ENCODE measurements at regions of chr3 and their contacts with region 1.

Region 1: GRCh38 chr3:112676659-112677234 is 35.8 kb upstream of the CCDC80 start:
- DNase-seq: peak; percentile 96
- H3K4me3 Mint-ChIP-seq: peak overlapping the region; percentile 14
- H3K27ac Mint-ChIP-seq: peak overlapping the region; percentile 14
- H3K4me1 Mint-ChIP-seq: peaks cover 52% of the 10 kb centered on the region
- H3K27me3 Mint-ChIP-seq: peaks cover 14% of the 10 kb centered on the region

Region 2: GRCh38 chr3:112464264-112464663 is 212.5 kb before region 1 on chr3:
- CTCF ChIA-PET with region 1: no interaction called
- POLR2A ChIA-PET with region 1: no interaction called
- intact Hi-C with region 1: loop called (anchors 5 kb)
- DNase-seq: no peak
- H3K4me3 Mint-ChIP-seq: no peak overlapping the region
- H3K27ac Mint-ChIP-seq: peak overlapping the region; percentile 31
- H3K4me1 Mint-ChIP-seq: peaks cover 84% of the 10 kb centered on the region
- H3K27me3 Mint-ChIP-seq: no peaks in the 10 kb centered on the region

Region 3: GRCh38 chr3:112958811-112959560 is 282.2 kb after region 1 on chr3:
- CTCF ChIA-PET with region 1: no interaction called
- POLR2A ChIA-PET with region 1: no interaction called
- intact Hi-C with region 1: loop called (anchors 5 kb)
- DNase-seq: peak; percentile 42
- H3K4me3 Mint-ChIP-seq: peak overlapping the region; percentile 69
- H3K27ac Mint-ChIP-seq: peak overlapping the region; percentile 78
- H3K4me1 Mint-ChIP-seq: peaks cover 48% of the 10 kb centered on the region
- H3K27me3 Mint-ChIP-seq: no peaks in the 10 kb centered on the region

Region 4: GRCh38 chr3:113838631-113839209 is 1162.0 kb after region 1 on chr3 and contains the start of gene GRAMD1C:
- CTCF ChIA-PET with region 1: no interaction called
- POLR2A ChIA-PET with region 1: no interaction called
- intact Hi-C with region 1: no loop called
- DNase-seq: peak; percentile 89
- H3K4me3 Mint-ChIP-seq: peak within 1 kb of the TSS; percentile 68
- H3K27ac Mint-ChIP-seq: no peak within 1 kb of the TSS
- H3K4me1 Mint-ChIP-seq: peaks cover 6% of the 10 kb centered on the region
- H3K27me3 Mint-ChIP-seq: no peaks in the 10 kb centered on the region
- total RNA-seq, gene GRAMD1C: 0.64 to 1.2 TPM